PC-3 (cell line): ENCODE measurements at regions of chr3 and their contacts with region 1.

Region 1: GRCh38 chr3:32733631-32734229 is 48.7 kb downstream of the CNOT10 start:
- DNase-seq: peak; percentile 62
- ATAC-seq: peak; percentile 73
- H3K4me3 ChIP-seq: no peak overlapping the region
- H3K27ac ChIP-seq: no peak overlapping the region
- H3K4me1 ChIP-seq: no peaks in the 10 kb centered on the region
- H3K27me3 ChIP-seq: no peaks in the 10 kb centered on the region
- CTCF ChIP-seq: peak; percentile 81

Region 2: DNA sequence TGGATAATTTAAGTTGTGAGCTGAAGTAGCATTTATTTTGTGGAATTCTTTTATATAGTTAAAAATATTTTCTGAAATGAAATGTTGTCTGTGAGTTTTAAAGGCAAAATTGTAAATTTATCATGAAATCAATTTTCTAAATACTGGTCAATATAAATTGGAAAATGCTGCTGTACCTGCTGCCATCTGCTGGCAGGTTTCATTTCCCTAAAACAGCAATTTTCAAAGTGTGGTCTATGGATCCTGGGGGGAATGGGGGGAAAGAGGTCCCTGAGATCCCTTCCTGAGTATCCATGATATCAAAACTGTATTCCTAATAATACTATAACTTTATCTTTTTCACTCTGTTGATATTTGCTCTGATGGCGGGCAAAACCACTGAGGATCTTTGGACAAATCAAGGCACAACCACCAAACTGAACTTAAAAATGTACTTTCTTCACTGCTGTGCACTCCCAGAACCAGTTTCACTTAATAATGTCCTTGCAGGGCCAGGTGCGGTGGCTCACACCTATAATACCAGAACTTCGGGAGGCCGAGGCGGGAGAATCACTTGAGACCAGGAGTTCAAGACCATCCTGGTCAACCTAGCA is 200.5 kb after region 1 on chr3:
- CTCF ChIA-PET with region 1: no interaction called
- POLR2A ChIA-PET with region 1: no interaction called
- intact Hi-C with region 1: loop called (anchors 1 kb)
- DNase-seq: peak; percentile 63
- ATAC-seq: no peak
- H3K4me3 ChIP-seq: no peak overlapping the region
- H3K27ac ChIP-seq: no peak overlapping the region
- H3K4me1 ChIP-seq: peaks cover 4% of the 10 kb centered on the region; the same call in 1 of the 2 replicates
- H3K27me3 ChIP-seq: no peaks in the 10 kb centered on the region
- CTCF ChIP-seq: peak; percentile 88